Right cardiac atrium (tissue), 5 donors: ENCODE measurements at regions of chr5 and their contacts with region 1.

Region 1: DNA sequence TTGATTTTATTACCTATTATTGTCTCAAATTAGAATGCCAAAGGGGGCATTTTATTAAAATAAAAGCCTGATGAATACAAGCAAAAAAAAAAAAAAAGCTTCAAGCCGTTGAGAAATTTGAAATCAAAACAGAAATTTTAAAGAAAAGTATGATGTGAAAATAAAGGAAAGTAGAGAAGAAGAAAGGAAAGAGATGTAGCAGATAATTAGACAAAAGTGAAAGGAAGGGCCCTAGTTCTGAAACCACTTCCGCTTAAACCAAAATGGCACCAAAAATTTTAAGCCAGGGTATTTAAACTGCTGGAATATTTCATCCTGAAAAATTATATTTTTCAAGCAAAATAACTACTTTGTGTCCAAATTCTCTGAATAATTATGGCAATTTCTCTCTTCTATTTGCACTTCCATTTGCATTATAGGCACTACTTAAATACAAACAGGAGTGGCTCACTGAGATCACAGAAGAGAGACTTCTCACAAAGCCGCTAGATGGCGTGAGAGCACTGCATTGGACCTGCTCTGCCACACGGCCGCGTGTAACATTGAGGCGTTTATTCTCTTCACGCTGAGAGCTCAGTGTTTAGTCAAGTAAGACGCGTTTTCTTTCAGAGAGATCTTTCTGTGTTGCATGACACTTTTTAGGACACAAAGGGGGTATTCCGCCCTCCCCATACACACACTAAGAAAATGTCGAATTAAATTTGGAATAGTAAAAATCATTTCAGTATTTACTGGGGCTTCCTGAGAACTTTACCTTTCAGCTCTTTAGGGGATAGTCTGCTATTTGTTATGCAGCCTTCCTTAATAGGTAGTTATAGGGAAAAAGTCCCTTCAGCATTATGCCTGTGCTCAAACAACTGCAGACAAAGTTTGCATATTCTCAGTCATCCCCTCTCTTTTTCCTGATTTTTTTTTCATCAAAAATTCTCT is 368.4 kb upstream of the CCNH start:
- DNase-seq: peak; percentile 75 to 79 (median 78)
- ATAC-seq: peak; percentile 92 to 94
- H3K4me3 ChIP-seq: no peak overlapping the region
- H3K27ac ChIP-seq: no peak overlapping the region
- H3K4me1 ChIP-seq: no peaks in the 10 kb centered on the region
- H3K27me3 ChIP-seq: no peaks in the 10 kb centered on the region

Region 2: DNA sequence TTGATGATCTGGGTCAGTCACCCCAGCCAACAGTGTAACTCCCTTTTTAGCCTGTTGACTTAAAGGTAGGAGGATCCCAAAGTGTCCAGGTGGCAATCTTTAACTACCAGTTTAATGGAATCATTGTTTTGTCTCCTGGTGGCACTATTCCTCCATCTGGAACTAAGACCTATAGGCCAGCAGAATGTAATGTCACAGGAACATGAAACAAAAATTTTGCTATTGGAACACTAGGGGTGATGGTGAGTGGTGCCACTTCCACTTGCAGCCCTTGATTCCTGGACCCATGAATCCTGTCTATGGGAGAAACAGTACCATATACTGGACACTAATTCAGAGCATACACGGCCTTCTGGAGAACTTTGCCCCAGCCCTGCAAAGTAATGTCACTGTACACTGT is 732.9 kb before region 1 on chr5:
- intact Hi-C with region 1: no loop called
- DNase-seq: no peak
- ATAC-seq: no peak
- H3K4me3 ChIP-seq: no peak overlapping the region
- H3K27ac ChIP-seq: no peak overlapping the region
- H3K4me1 ChIP-seq: no peaks in the 10 kb centered on the region
- H3K27me3 ChIP-seq: no peaks in the 10 kb centered on the region

Region 3: DNA sequence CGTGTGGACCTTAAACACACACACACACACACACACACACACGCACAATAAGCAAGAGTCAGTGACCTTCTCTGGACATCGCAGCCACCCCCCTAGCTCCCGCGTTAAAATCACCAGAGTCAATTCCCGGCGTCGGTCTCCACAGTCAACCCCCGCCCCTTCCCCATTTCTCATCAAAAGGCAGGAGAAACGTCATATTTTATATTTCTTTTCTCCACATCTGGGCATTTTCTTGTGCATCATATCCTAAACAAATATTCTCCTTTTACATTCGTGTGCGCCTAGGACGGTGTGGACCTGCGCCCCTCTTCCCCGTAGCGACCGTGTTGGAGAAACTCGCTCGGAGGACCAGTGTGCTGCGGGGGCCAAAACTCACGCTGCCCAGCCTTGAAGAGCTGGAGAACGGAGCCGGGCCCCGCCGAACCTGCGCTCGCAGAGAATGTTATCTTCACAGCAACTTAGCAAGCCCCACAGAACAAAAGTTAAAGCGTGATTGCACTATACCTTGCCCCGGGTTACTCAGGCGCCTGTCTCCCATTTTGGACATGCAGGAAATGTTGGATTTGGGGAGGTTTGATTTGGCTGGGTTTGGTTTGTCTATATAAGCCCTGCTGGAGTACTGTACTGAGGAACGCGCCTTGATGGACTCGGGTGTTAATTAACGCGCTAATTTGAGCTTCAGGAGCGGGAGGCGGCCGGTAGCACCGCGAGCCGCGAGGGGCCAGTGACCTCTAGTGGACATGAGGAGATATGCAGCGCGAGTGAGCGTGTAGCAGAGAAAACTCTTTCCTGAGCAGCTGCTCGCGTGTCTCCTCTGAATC is 909.5 kb after region 1 on chr5:
- intact Hi-C with region 1: loop called in 2 of 4 experiments (anchors 5 kb)
- DNase-seq: peak; percentile 63 to 82 (median 82)
- ATAC-seq: peak; percentile 85 to 88
- H3K4me3 ChIP-seq: peak overlapping the region; percentile 42
- H3K27ac ChIP-seq: no peak overlapping the region
- H3K4me1 ChIP-seq: no peaks in the 10 kb centered on the region
- H3K27me3 ChIP-seq: no peaks in the 10 kb centered on the region